ENCODE measurements at regions of chr1 and their contacts with region 1.

Region 1: DNA sequence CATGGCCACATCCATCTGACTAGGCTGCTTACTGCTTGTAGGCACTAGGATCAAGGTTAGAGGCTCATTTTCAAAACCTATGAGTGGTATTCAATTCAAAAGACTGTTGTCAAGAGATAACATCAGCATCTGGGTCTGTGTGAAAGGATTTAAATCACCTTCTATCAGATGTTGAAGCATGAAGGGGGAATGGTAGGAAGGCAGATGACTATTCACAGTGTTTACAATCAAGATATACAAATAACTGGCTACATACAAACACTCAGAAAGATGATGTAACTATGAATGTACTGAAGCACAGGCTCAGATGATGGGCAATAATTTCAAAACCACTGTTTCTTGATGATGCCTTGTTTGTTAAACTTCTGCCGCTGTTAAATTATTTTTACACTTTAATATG is 249.2 kb downstream of the SLC45A1 start:
- DNase-seq: no peak
- H3K4me3 ChIP-seq: no peak overlapping the region
- H3K27ac ChIP-seq: no peak overlapping the region
- H3K4me1 ChIP-seq: peaks cover 16 to 51% of the 10 kb centered on the region in 2 donors
- H3K27me3 ChIP-seq: no peaks in the 10 kb centered on the region
- CTCF ChIP-seq: no peak
- POLR2A ChIP-seq: no peak

Region 2: DNA sequence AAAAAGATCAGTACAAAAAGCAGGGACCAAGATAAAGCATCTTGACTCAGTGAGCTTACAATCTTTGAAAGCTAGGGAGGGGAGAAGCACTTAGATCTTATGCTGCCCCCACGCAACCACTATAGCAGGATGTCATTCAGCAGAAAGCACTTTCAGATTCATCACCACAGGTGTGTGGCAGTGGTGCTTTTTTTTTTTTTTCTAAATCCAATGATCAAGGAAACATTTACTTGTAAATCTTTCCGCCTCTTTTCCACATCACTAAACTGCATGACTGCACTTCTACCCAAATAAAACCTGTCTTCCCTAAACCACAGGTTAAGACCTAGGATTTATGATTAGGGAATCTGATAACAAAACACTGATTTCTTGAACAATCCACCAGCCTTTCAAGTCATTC is 94.5 kb before region 1 on chr1:
- intact Hi-C with region 1: no loop called
- DNase-seq: no peak
- H3K4me3 ChIP-seq: no peak overlapping the region
- H3K27ac ChIP-seq: no peak overlapping the region
- H3K4me1 ChIP-seq: peaks cover 10 to 20% of the 10 kb centered on the region in 2 donors
- H3K27me3 ChIP-seq: no peaks in the 10 kb centered on the region
- CTCF ChIP-seq: no peak
- POLR2A ChIP-seq: no peak

Region 3: GRCh38 chr1:8671306-8671917 is 104.3 kb after region 1 on chr1:
- intact Hi-C with region 1: loop called in 1 of 2 experiments (anchors 5 kb)
- DNase-seq: peak in 6 of 7 donors; percentile 39 to 74 (median 58)
- H3K4me3 ChIP-seq: no peak overlapping the region
- H3K27ac ChIP-seq: no peak overlapping the region
- H3K4me1 ChIP-seq: peaks cover 9 to 53% of the 10 kb centered on the region in 2 donors
- H3K27me3 ChIP-seq: no peaks in the 10 kb centered on the region
- CTCF ChIP-seq: peak; percentile 69 to 86 (median 82)
- POLR2A ChIP-seq: no peak

Region 4: GRCh38 chr1:8903908-8904650 is 336.9 kb after region 1 on chr1:
- intact Hi-C with region 1: no loop called
- DNase-seq: peak in 6 of 7 donors; percentile 53 to 84 (median 82)
- H3K4me3 ChIP-seq: no peak overlapping the region
- H3K27ac ChIP-seq: peak overlapping the region in 2 of 5 donors; percentile 5 to 70
- H3K4me1 ChIP-seq: peaks cover 0 to 9% of the 10 kb centered on the region in 2 donors
- H3K27me3 ChIP-seq: no peaks in the 10 kb centered on the region
- CTCF ChIP-seq: no peak
- POLR2A ChIP-seq: no peak